Naive thymus-derived CD4-positive, alpha-beta T cell (primary cell): ENCODE measurements at regions of chr7 and their contacts with region 1.

Region 1: DNA sequence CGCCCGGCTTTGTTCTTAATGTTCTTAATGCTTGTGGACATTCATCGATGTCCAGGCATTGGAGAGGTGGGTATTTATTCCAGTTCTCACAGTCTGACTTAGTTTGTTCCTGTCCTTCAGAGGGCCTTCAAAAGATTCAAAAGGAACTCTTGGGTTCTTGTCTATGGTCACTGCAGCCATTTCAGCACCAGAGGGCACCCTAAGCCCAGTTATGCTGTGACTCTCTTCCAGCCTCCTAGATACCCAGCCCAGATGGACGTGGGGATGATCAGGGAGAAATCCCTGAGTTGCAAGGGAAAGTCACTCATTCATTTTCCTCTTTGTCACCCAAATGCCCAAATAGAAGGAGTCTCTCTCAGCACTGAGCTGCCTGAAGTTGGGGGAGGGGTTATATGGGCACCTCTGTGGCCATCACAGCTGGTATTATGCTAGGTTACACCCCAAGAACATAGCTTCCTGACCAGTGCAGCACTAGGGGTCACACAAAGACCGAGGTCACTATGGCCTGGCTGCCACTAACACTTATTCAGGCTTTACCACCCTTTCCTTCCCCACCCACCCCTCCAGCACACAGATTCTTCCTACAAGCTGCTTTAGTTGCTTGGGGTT is 26.5 kb upstream of the CCDC126 start:
- DNase-seq: peak; percentile 19 to 68 (median 54)
- ATAC-seq: peak; percentile 83
- H3K4me3 ChIP-seq: no peak overlapping the region
- H3K4me3 Mint-ChIP-seq: no peak overlapping the region
- H3K27ac ChIP-seq: no peak overlapping the region
- H3K27ac Mint-ChIP-seq: no peak overlapping the region
- H3K4me1 ChIP-seq: no peaks in the 10 kb centered on the region
- H3K4me1 Mint-ChIP-seq: peaks cover 0 to 5% (median 0%) of the 10 kb centered on the region in 7 donors
- H3K27me3 ChIP-seq: peaks cover 0 to 3% of the 10 kb centered on the region in 2 donors
- H3K27me3 Mint-ChIP-seq: peaks cover 4 to 24% (median 12%) of the 10 kb centered on the region in 5 donors

Region 2: DNA sequence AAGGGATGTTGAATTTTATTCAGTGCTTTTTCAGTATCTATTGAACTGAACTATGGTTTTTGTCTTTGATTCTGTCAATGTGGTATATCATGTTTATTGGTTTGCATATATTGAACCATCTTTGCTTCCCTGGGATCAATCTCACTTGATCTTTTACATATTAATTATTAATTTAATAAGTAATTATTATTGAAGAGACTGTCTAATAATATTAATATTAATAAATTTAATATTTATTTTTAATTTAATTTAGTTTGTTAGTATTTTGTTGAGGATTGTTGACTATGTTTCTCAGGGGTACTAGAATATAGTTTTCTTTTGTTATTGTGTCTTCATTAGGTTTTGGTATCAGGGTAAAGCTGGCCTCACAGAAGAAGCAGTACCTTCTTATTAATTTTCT is 12.4 kb before region 1 on chr7:
- CTCF ChIA-PET with region 1: no interaction called
- POLR2A ChIA-PET with region 1: no interaction called
- intact Hi-C with region 1: no loop called
- DNase-seq: no peak
- ATAC-seq: no peak
- H3K4me3 ChIP-seq: no peak overlapping the region
- H3K4me3 Mint-ChIP-seq: no peak overlapping the region
- H3K27ac ChIP-seq: no peak overlapping the region
- H3K27ac Mint-ChIP-seq: no peak overlapping the region
- H3K4me1 ChIP-seq: no peaks in the 10 kb centered on the region
- H3K4me1 Mint-ChIP-seq: no peaks in the 10 kb centered on the region
- H3K27me3 ChIP-seq: no peaks in the 10 kb centered on the region
- H3K27me3 Mint-ChIP-seq: peaks cover 0 to 34% (median 0%) of the 10 kb centered on the region in 5 donors

Region 3: GRCh38 chr7:23628370-23628769 is 57.7 kb after region 1 on chr7:
- CTCF ChIA-PET with region 1: no interaction called
- POLR2A ChIA-PET with region 1: no interaction called
- intact Hi-C with region 1: no loop called
- DNase-seq: no peak
- ATAC-seq: no peak
- H3K4me3 ChIP-seq: no peak overlapping the region
- H3K4me3 Mint-ChIP-seq: no peak overlapping the region
- H3K27ac ChIP-seq: no peak overlapping the region
- H3K27ac Mint-ChIP-seq: no peak overlapping the region
- H3K4me1 ChIP-seq: no peaks in the 10 kb centered on the region
- H3K4me1 Mint-ChIP-seq: peaks cover 0 to 11% (median 5%) of the 10 kb centered on the region in 7 donors
- H3K27me3 ChIP-seq: no peaks in the 10 kb centered on the region
- H3K27me3 Mint-ChIP-seq: no peaks in the 10 kb centered on the region

Region 4: GRCh38 chr7:23712368-23713284 is 141.9 kb after region 1 on chr7:
- CTCF ChIA-PET with region 1: interaction called, 34 read pairs
- POLR2A ChIA-PET with region 1: no interaction called
- intact Hi-C with region 1: loop called (anchors 1 kb)
- DNase-seq: peak in 7 of 9 donors; percentile 11 to 48 (median 37)
- ATAC-seq: peak; percentile 45
- H3K4me3 ChIP-seq: no peak overlapping the region
- H3K4me3 Mint-ChIP-seq: no peak overlapping the region
- H3K27ac ChIP-seq: no peak overlapping the region
- H3K27ac Mint-ChIP-seq: no peak overlapping the region
- H3K4me1 ChIP-seq: no peaks in the 10 kb centered on the region
- H3K4me1 Mint-ChIP-seq: peaks cover 0 to 2% (median 0%) of the 10 kb centered on the region in 7 donors
- H3K27me3 ChIP-seq: no peaks in the 10 kb centered on the region
- H3K27me3 Mint-ChIP-seq: peaks cover 0 to 4% (median 0%) of the 10 kb centered on the region in 5 donors

Region 5: DNA sequence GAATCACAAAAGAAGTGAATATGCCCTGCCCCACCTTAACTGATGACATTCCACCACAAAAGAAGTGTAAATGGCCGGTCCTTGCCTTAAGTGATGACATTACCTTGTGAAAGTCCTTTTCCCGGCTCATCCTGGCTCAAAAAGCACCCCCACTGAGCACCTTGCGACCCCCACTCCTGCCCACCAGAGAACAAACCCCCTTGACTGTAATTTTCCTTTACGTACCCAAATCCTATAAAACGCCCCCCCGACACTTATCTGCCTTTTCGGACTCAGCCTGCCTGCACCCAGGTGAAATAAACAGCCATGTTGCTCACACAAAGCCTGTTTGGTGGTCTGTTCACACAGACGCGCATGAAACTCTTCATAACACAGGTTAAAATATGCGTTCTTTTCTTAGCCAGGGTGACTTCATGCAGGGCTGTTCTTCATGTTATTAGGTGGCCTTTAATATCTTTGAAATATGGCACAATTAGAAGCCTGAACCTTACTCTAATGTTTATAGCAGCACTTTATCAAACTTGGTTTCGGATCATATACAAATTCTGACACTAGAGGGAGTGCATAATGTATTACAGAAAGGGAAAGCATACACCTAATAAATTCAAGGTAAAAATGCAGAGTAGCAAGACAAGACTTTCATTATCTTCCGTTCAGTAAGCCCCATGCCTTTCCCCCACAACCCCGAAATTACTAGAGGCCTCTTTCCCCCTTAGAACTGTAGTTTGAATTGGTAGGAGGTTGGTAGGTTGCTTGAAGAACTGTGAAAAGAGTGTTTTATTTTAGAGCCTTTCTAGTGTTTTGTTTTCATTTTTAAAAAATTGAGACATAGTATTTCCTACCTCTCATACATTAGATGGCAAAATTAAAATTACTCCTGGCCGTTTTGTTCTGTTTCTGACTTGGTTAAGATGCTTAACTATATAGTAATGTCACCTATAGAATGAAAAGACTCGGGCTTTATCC is 831.2 kb after region 1 on chr7:
- CTCF ChIA-PET with region 1: no interaction called
- POLR2A ChIA-PET with region 1: no interaction called
- intact Hi-C with region 1: loop called in 1 of 2 experiments (anchors 10 kb)
- DNase-seq: peak in 5 of 9 donors; percentile 20 to 35 (median 27)
- ATAC-seq: no peak
- H3K4me3 ChIP-seq: no peak overlapping the region
- H3K4me3 Mint-ChIP-seq: peak overlapping the region in 2 of 10 donors; percentile 25 to 41
- H3K27ac ChIP-seq: no peak overlapping the region
- H3K27ac Mint-ChIP-seq: no peak overlapping the region
- H3K4me1 ChIP-seq: peaks cover 0 to 3% of the 10 kb centered on the region in 2 donors
- H3K4me1 Mint-ChIP-seq: peaks cover 0 to 12% (median 10%) of the 10 kb centered on the region in 7 donors
- H3K27me3 ChIP-seq: no peaks in the 10 kb centered on the region
- H3K27me3 Mint-ChIP-seq: peaks cover 0 to 11% (median 0%) of the 10 kb centered on the region in 5 donors

Region 6: DNA sequence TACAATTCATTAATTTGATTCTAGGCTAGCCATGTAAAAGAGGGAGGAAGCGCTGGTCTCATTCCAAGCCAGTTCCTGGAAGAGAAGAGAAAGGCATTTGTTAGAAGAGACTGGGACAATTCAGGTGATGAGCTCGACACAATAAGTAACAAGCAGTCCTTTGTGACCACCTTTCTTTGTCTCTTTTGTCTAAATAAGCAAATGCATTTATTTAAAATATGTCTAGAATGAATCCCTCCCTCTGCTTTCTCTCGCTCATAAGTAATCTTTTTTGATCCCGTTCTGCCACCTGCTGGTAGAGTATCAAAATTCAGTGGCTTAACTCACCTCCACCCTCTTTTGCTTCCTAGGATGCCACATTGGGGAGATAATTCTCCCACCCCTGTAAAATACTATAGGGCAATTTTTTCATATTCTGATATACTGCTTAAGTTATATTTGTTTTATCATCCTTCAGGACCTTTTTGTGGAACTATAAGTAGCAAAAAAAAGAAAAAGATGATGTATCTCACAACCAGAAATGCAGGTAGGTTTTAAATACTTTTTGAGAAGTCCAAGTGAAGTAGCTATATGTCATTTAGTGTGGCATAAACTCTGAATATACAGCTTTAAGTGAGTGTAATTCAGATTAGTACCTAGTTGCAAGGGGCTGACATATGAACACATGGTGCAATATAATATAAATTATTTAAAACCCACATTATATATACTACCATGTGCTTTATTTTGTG is 1095.0 kb after region 1 on chr7:
- CTCF ChIA-PET with region 1: interaction called, 3 read pairs
- POLR2A ChIA-PET with region 1: no interaction called
- intact Hi-C with region 1: loop called (anchors 1 kb)
- DNase-seq: peak in 8 of 9 donors; percentile 14 to 59 (median 37)
- ATAC-seq: peak; percentile 52
- H3K4me3 ChIP-seq: no peak overlapping the region
- H3K4me3 Mint-ChIP-seq: no peak overlapping the region
- H3K27ac ChIP-seq: no peak overlapping the region
- H3K27ac Mint-ChIP-seq: peak overlapping the region in 1 of 9 donors; percentile 21
- H3K4me1 ChIP-seq: no peaks in the 10 kb centered on the region
- H3K4me1 Mint-ChIP-seq: peaks cover 0 to 4% (median 0%) of the 10 kb centered on the region in 7 donors
- H3K27me3 ChIP-seq: no peaks in the 10 kb centered on the region
- H3K27me3 Mint-ChIP-seq: no peaks in the 10 kb centered on the region

Region 7: GRCh38 chr7:25098096-25099046 is 1527.7 kb after region 1 on chr7:
- CTCF ChIA-PET with region 1: interaction called, 3 read pairs
- POLR2A ChIA-PET with region 1: no interaction called
- intact Hi-C with region 1: loop called (anchors 1 to 10 kb)
- DNase-seq: peak in 8 of 9 donors; percentile 26 to 53 (median 44)
- ATAC-seq: peak; percentile 93
- H3K4me3 ChIP-seq: no peak overlapping the region
- H3K4me3 Mint-ChIP-seq: no peak overlapping the region
- H3K27ac ChIP-seq: no peak overlapping the region
- H3K27ac Mint-ChIP-seq: no peak overlapping the region
- H3K4me1 ChIP-seq: no peaks in the 10 kb centered on the region
- H3K4me1 Mint-ChIP-seq: peaks cover 0 to 14% (median 6%) of the 10 kb centered on the region in 7 donors
- H3K27me3 ChIP-seq: no peaks in the 10 kb centered on the region
- H3K27me3 Mint-ChIP-seq: peaks cover 0 to 18% (median 0%) of the 10 kb centered on the region in 5 donors